ENCODE measurements at regions of chr5 and their contacts with region 1.

Region 1: DNA sequence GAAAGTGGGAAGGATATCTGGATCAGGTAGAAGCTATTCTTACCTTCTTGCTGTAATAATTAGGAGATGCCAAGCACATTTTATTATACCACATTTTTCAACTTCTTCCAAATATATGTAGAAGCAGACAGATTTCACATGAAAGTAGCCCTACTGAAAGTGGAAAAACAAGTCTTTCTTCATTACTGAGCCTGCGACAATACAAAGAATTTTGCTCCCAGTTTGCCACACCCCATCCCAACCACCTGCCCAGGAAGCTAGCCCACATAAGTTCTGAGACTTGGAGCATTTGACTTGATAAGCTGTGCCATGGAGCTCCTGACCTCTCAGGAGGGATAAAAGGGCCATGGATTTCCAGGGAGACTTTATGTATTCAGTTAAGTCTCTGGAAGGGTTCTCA is 249.1 kb upstream of the ADCY2 start:
- DNase-seq: no peak
- H3K4me3 ChIP-seq: no peak overlapping the region
- H3K27ac ChIP-seq: no peak overlapping the region
- H3K4me1 ChIP-seq: no peaks in the 10 kb centered on the region
- H3K27me3 ChIP-seq: no peaks in the 10 kb centered on the region
- CTCF ChIP-seq: no peak

Region 2: GRCh38 chr5:6961837-6962635 is 184.8 kb before region 1 on chr5:
- CTCF ChIA-PET with region 1: no interaction called
- dilution Hi-C with region 1: no loop called
- in situ Hi-C with region 1: no loop called
- intact Hi-C with region 1: no loop called
- DNase-seq: no peak
- H3K4me3 ChIP-seq: no peak overlapping the region
- H3K27ac ChIP-seq: no peak overlapping the region
- H3K4me1 ChIP-seq: no peaks in the 10 kb centered on the region
- H3K27me3 ChIP-seq: no peaks in the 10 kb centered on the region
- CTCF ChIP-seq: no peak

Region 3: GRCh38 chr5:7078901-7079300 is 68.0 kb before region 1 on chr5:
- CTCF ChIA-PET with region 1: no interaction called
- dilution Hi-C with region 1: no loop called
- in situ Hi-C with region 1: no loop called
- intact Hi-C with region 1: no loop called
- DNase-seq: no peak
- H3K4me3 ChIP-seq: no peak overlapping the region
- H3K27ac ChIP-seq: no peak overlapping the region
- H3K4me1 ChIP-seq: no peaks in the 10 kb centered on the region
- H3K27me3 ChIP-seq: no peaks in the 10 kb centered on the region
- CTCF ChIP-seq: no peak

Region 4: GRCh38 chr5:7225826-7226225 is 78.9 kb after region 1 on chr5:
- CTCF ChIA-PET with region 1: no interaction called
- dilution Hi-C with region 1: loop called (anchors 5 kb)
- in situ Hi-C with region 1: no loop called
- intact Hi-C with region 1: no loop called
- DNase-seq: no peak
- H3K4me3 ChIP-seq: no peak overlapping the region
- H3K27ac ChIP-seq: no peak overlapping the region
- H3K4me1 ChIP-seq: no peaks in the 10 kb centered on the region
- H3K27me3 ChIP-seq: no peaks in the 10 kb centered on the region
- CTCF ChIP-seq: no peak

Measured in mammary epithelial cell (primary cell).